Transverse colon (tissue), 4 donors: ENCODE measurements at regions of chr4 and their contacts with region 1.

Region 1: GRCh38 chr4:48079972-48080391 is 54.1 kb downstream of the TXK start:
- DNase-seq: no peak
- H3K4me3 ChIP-seq: no peak overlapping the region
- H3K27ac ChIP-seq: no peak overlapping the region
- H3K4me1 ChIP-seq: peaks cover 0 to 5% (median 0%) of the 10 kb centered on the region in 4 donors
- H3K27me3 ChIP-seq: no peaks in the 10 kb centered on the region
- CTCF ChIP-seq: no peak
- EP300 ChIP-seq: no peak
- POLR2A ChIP-seq: no peak

Region 2: GRCh38 chr4:47510506-47511143 is 569.4 kb before region 1 on chr4:
- in situ Hi-C with region 1: no loop called
- intact Hi-C with region 1: no loop called
- DNase-seq: no peak
- H3K4me3 ChIP-seq: no peak overlapping the region
- H3K27ac ChIP-seq: peak overlapping the region; percentile 14 to 57 (median 24)
- H3K4me1 ChIP-seq: peaks cover 0 to 10% (median 0%) of the 10 kb centered on the region in 4 donors
- H3K27me3 ChIP-seq: no peaks in the 10 kb centered on the region
- CTCF ChIP-seq: peak in 1 of 5 experiments; percentile 11
- EP300 ChIP-seq: no peak
- POLR2A ChIP-seq: no peak

Region 3: GRCh38 chr4:47926639-47927258 is 153.2 kb before region 1 on chr4:
- in situ Hi-C with region 1: no loop called
- intact Hi-C with region 1: loop called (anchors 10 kb)
- DNase-seq: peak; percentile 51
- H3K4me3 ChIP-seq: peak overlapping the region in 2 of 4 donors; percentile 3 to 27
- H3K27ac ChIP-seq: no peak overlapping the region
- H3K4me1 ChIP-seq: peaks cover 0 to 7% (median 2%) of the 10 kb centered on the region in 4 donors
- H3K27me3 ChIP-seq: no peaks in the 10 kb centered on the region
- CTCF ChIP-seq: peak; percentile 43 to 58 (median 56)
- EP300 ChIP-seq: no peak
- POLR2A ChIP-seq: no peak

Region 4: DNA sequence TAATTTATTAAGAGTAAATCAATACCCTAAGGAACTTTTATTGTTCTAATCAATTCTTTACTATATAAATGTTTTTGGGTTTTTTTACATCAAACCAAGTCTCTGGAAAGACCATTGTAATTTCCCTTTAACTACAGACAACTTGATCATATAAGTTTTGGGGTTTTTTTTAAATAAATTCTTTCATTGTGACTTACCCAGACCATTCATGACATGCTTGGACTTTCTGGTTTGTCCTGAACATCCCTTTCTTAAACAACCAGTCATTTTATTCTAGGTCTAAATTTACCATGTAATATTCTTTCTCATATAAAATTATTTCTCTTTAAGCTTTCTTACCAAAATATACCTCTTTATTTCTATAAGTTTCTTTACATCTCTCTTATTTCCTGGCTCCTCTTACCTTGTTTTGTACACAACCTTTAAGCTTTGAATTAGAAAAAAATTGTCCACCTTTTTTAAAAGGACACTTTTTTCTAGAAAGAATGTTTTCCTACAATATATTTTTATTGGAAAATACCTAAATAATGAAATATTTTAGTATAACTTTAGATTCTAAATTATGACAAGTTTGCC is 71.9 kb before region 1 on chr4:
- in situ Hi-C with region 1: no loop called
- intact Hi-C with region 1: loop called (anchors 10 kb)
- DNase-seq: no peak
- H3K4me3 ChIP-seq: no peak overlapping the region
- H3K27ac ChIP-seq: no peak overlapping the region
- H3K4me1 ChIP-seq: peaks cover 0 to 4% (median 0%) of the 10 kb centered on the region in 4 donors
- H3K27me3 ChIP-seq: no peaks in the 10 kb centered on the region
- CTCF ChIP-seq: no peak
- EP300 ChIP-seq: no peak
- POLR2A ChIP-seq: no peak

Region 5: DNA sequence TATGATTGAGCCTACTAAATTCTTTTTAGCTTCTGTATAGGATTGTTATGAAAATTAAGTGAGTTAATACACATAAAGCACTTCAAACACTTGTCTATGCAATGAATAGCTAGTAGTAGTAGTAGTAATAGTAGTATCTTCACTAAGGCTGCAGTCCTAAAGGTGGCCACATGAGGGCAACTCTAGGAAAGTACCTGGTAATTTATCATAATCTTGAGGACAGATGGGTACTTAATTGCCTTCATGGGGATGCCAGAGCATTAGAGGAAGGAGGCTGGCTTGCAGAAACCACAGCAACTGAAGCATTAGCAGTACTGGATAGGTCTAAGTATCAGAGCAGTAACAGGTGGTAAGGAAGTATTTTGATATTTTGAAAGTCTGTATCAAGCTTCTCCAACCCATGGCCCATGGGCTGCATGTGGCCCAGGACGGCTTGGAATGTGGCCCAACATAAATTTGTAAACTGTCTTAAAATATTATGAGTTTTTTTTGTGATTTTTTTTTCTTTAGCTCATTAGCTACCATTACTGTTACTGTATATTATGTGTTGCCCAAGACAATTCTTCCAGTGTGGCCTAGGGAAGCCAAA is 46.1 kb before region 1 on chr4:
- in situ Hi-C with region 1: loop called in 1 of 4 experiments (anchors 10 kb)
- intact Hi-C with region 1: no loop called
- DNase-seq: peak; percentile 57
- H3K4me3 ChIP-seq: no peak overlapping the region
- H3K27ac ChIP-seq: peak overlapping the region in 2 of 4 donors; percentile 33 to 64
- H3K4me1 ChIP-seq: peaks cover 0 to 33% (median 13%) of the 10 kb centered on the region in 4 donors
- H3K27me3 ChIP-seq: no peaks in the 10 kb centered on the region
- CTCF ChIP-seq: peak; percentile 41 to 65 (median 57)
- EP300 ChIP-seq: no peak
- POLR2A ChIP-seq: no peak